Caco-2 (cell line): ENCODE measurements at regions of chr11 and their contacts with region 1.

Region 1: GRCh38 chr11:134742956-134743819 is 331.1 kb upstream of the B3GAT1 start:
- DNase-seq: peak; percentile 83 to 87
- H3K4me3 ChIP-seq: no peak overlapping the region
- H3K4me3 Mint-ChIP-seq: peak overlapping the region; percentile 9
- H3K27ac Mint-ChIP-seq: no peak overlapping the region
- H3K4me1 ChIP-seq: peaks cover 64% of the 10 kb centered on the region
- H3K4me1 Mint-ChIP-seq: peaks cover 50% of the 10 kb centered on the region
- H3K27me3 ChIP-seq: no peaks in the 10 kb centered on the region
- H3K27me3 Mint-ChIP-seq: no peaks in the 10 kb centered on the region
- CTCF ChIP-seq: no peak

Region 2: GRCh38 chr11:134845474-134846327 is 102.5 kb after region 1 on chr11:
- CTCF ChIA-PET with region 1: no interaction called
- POLR2A ChIA-PET with region 1: no interaction called
- intact Hi-C with region 1: no loop called
- DNase-seq: no peak
- H3K4me3 ChIP-seq: no peak overlapping the region
- H3K4me3 Mint-ChIP-seq: no peak overlapping the region
- H3K27ac Mint-ChIP-seq: no peak overlapping the region
- H3K4me1 ChIP-seq: 0 out of 2 replicates have a peak, but pooled peaks cover 4% of the 10 kb centered on the region
- H3K4me1 Mint-ChIP-seq: no peaks in the 10 kb centered on the region
- H3K27me3 ChIP-seq: no peaks in the 10 kb centered on the region
- H3K27me3 Mint-ChIP-seq: no peaks in the 10 kb centered on the region
- CTCF ChIP-seq: no peak

Region 3: DNA sequence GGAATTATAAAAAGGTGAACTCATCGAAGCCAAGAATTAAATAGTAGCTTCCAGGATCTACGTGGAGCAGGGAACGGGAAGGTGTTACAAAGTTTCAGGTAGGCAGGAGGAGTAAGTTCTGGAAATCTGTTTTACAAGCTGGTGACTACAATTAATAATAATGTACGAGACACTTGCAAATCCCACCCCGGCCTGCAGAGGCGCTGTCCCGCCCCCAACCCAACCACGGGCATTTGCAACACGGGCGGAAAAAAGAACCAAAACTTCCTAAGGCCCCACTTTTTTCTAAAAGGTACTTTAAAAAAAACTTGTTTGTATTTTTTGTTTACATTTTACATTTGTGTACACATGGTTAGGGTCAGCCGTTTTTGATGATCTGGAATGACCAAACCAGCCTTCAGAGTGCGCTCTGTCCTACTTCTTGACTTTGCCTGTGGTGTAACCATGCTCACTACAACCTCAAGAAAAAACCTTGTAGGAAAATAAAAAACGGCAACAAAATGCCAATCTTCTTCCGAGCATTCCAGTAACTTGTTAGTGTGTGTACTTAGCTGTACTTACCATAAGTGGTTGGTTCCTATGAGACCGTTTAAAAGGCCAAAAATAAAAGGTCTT is 118.4 kb after region 1 on chr11:
- CTCF ChIA-PET with region 1: no interaction called
- POLR2A ChIA-PET with region 1: no interaction called
- intact Hi-C with region 1: loop called (anchors 1 kb)
- DNase-seq: no peak
- H3K4me3 ChIP-seq: no peak overlapping the region
- H3K4me3 Mint-ChIP-seq: no peak overlapping the region
- H3K27ac Mint-ChIP-seq: peak overlapping the region; percentile 99
- H3K4me1 ChIP-seq: peaks cover 33% of the 10 kb centered on the region
- H3K4me1 Mint-ChIP-seq: peaks cover 40% of the 10 kb centered on the region
- H3K27me3 ChIP-seq: no peaks in the 10 kb centered on the region
- H3K27me3 Mint-ChIP-seq: no peaks in the 10 kb centered on the region
- CTCF ChIP-seq: peak; percentile 10 to 50

Region 4: DNA sequence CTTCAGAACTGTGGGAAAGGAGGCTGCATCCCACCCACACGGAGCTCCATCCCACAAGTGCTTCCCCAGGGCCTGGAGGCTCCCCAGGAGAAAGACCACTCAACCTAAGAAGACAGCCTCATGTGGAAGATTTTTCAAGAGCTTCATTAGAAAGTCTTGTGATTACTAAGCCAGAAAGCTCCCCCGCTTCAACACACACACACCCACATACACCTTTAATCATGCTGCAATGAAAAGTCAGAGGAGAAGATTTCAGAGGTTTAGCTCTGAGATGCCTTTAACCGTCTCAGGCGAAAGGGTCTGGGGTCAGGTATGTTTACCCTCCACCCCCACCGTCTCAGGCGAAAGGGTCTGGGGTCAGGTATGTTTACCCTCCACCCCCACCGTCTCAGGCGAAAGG is 303.4 kb after region 1 on chr11:
- CTCF ChIA-PET with region 1: interaction called, 3 read pairs
- POLR2A ChIA-PET with region 1: no interaction called
- intact Hi-C with region 1: loop called (anchors 1 kb)
- DNase-seq: peak in 1 of 2 experiments; percentile 63
- H3K4me3 ChIP-seq: no peak overlapping the region
- H3K4me3 Mint-ChIP-seq: peak overlapping the region; percentile 51
- H3K27ac Mint-ChIP-seq: peak overlapping the region; percentile 73
- H3K4me1 ChIP-seq: peaks cover 21% of the 10 kb centered on the region
- H3K4me1 Mint-ChIP-seq: peaks cover 17% of the 10 kb centered on the region
- H3K27me3 ChIP-seq: no peaks in the 10 kb centered on the region
- H3K27me3 Mint-ChIP-seq: no peaks in the 10 kb centered on the region
- CTCF ChIP-seq: no peak